PC-9 (cell line): ENCODE measurements at regions of chr5 and their contacts with region 1.

Region 1: DNA sequence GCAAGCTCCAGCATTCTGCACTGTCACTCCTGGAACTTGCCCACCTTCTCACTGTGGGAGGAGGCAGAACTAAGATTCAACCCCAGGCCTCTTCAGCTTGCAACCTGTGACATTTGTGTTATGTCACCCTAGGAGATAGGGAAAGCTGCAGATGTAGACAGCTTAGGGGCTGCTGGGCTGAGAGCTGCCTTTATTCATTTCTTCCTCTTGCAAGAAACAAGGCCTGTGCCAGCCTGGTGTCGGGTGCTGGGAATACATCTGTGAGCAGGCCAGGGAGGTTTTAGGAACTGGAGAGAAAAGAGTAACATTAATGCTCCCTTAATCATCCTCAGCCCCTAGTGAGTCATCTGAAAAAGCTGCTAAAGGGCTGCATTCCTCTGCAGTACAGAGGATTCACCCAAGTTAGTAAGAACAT is 101.8 kb downstream of the FGF18 start:
- DNase-seq: peak; percentile 82 to 96
- H3K4me3 ChIP-seq: peak overlapping the region; percentile 47; the same call in 1 of the 2 replicates
- H3K27ac ChIP-seq: peak overlapping the region; percentile 98
- H3K4me1 ChIP-seq: peaks cover 48% of the 10 kb centered on the region
- H3K27me3 ChIP-seq: no peaks in the 10 kb centered on the region
- CTCF ChIP-seq: peak; percentile 46; the same call in 1 of the 2 replicates

Region 2: GRCh38 chr5:171424726-171425125 is 96.5 kb before region 1 on chr5:
- CTCF ChIA-PET with region 1: interaction called, 6 read pairs
- POLR2A ChIA-PET with region 1: no interaction called
- intact Hi-C with region 1: loop called (anchors 1 kb)
- DNase-seq: peak; percentile 46 to 51
- H3K4me3 ChIP-seq: no peak overlapping the region
- H3K27ac ChIP-seq: no peak overlapping the region
- H3K4me1 ChIP-seq: 0 out of 2 replicates have a peak, but pooled peaks cover 12% of the 10 kb centered on the region
- H3K27me3 ChIP-seq: no peaks in the 10 kb centered on the region
- CTCF ChIP-seq: no peak

Region 3: DNA sequence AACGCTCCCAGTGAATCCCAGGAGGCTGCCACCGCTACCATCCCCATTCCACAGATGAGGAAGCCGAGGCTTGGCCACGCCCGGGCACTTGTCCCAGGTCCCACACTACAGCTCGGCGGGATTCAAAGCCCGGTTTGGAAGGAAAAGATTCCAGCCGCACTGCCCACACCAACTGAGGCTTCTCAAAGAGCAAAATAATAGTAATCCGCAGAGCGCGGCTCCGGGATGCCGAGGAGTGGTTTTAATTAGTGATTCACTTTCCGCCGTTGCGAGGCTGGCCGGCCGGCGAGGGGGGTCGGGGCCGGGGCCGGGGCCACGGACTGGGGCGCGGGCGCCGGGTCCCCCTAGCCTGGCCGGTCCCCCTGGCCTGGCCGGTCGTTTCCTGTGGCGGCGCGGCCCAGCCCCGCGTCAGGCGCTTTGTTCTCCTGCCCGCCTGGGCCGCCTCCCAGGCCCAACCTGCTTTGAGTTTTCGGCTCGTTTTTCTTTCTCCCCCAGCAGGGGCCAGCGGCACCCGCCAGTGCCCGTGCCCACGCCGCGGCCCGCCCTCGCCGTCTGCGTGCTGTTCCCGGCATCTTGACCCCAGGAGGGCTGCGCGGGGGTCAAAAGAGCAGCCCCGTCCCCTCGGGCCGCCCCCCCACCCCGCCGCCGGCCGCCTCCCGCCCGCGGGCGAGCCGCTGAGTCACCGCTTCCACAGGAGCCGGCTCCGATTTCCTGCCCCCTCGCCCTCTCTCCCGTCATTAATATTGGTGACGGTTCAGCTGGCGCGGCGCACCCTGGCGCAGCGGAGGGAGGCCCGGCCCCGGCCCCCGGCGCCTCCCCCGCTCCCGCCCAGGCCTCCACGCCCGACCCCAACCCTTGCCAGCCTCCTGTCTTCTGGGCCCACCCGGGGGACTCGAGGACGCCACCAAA is 70.5 kb before region 1 on chr5:
- CTCF ChIA-PET with region 1: no interaction called
- POLR2A ChIA-PET with region 1: no interaction called
- intact Hi-C with region 1: no loop called
- DNase-seq: no peak
- H3K4me3 ChIP-seq: no peak overlapping the region; the same call in 1 of the 2 replicates
- H3K27ac ChIP-seq: no peak overlapping the region
- H3K4me1 ChIP-seq: no peaks in the 10 kb centered on the region
- H3K27me3 ChIP-seq: no peaks in the 10 kb centered on the region
- CTCF ChIP-seq: no peak

Region 4: DNA sequence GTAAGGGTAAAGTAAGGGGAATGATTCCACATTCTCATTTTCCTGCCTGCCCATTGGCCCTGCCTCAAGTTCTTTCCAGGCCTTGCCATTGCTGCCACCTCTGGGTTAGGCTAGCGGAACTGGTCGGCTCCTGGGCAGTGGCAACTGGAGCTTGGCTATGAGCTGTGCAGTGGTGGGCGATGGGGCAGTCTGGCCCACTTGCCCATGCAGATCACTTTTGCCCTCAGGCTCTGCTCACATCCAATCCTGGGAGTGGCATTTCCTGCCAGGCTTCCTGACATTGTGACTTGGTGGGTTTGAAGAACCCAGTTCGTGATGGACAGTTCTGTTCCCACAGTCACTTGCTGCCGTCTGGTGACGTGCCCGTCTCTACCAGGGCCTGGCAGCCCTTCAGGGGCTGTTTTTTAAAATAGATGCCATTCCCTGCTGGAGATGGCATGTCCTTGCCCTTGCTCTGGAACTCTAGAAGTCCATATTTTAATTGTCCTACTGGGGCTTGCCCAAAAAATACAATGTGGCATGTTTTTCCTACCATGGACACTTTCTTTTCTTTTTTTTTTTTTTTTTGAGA is 15.7 kb before region 1 on chr5:
- CTCF ChIA-PET with region 1: interaction called, 7 read pairs
- POLR2A ChIA-PET with region 1: interaction called, 11 read pairs
- intact Hi-C with region 1: no loop called
- DNase-seq: no peak
- H3K4me3 ChIP-seq: no peak overlapping the region
- H3K27ac ChIP-seq: no peak overlapping the region
- H3K4me1 ChIP-seq: no peaks in the 10 kb centered on the region
- H3K27me3 ChIP-seq: no peaks in the 10 kb centered on the region
- CTCF ChIP-seq: no peak

Region 5: DNA sequence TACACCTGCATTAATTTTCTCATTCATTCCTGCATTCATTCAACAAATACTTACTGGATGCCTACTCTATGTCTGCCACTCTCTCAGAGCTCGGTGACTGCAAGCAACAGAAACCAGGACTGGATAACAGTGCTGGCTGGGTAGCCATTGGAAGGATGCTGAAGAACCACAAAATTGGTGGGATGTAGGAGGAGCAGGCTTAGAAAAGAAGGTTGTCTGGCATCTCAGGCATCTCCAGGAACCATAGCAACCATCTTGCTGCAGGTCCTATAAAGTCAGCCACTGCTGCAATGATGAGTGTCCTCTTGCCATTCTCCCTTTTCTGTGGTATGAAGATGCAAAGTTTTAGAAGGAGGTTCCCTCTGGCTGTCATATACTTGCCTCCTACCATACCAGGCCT is 66.8 kb after region 1 on chr5:
- CTCF ChIA-PET with region 1: no interaction called
- POLR2A ChIA-PET with region 1: interaction called, 17 read pairs
- intact Hi-C with region 1: no loop called
- DNase-seq: no peak
- H3K4me3 ChIP-seq: no peak overlapping the region
- H3K27ac ChIP-seq: no peak overlapping the region
- H3K4me1 ChIP-seq: no peaks in the 10 kb centered on the region
- H3K27me3 ChIP-seq: no peaks in the 10 kb centered on the region
- CTCF ChIP-seq: no peak

Region 6: GRCh38 chr5:172315587-172316493 is 794.6 kb after region 1 on chr5:
- CTCF ChIA-PET with region 1: no interaction called
- POLR2A ChIA-PET with region 1: interaction called, 23 read pairs
- intact Hi-C with region 1: no loop called
- DNase-seq: no peak
- H3K4me3 ChIP-seq: no peak overlapping the region; the same call in 1 of the 2 replicates
- H3K27ac ChIP-seq: peak overlapping the region; percentile 96
- H3K4me1 ChIP-seq: peaks cover 37% of the 10 kb centered on the region
- H3K27me3 ChIP-seq: no peaks in the 10 kb centered on the region
- CTCF ChIP-seq: no peak